ENCODE measurements at regions of chr1 and their contacts with region 1.

Region 1: GRCh38 chr1:16946646-16947045 is 24.9 kb downstream of the CROCC start:
- DNase-seq: no peak
- H3K4me3 ChIP-seq: no peak overlapping the region
- H3K27ac ChIP-seq: no peak overlapping the region
- H3K4me1 ChIP-seq: no peaks in the 10 kb centered on the region
- H3K27me3 ChIP-seq: no peaks in the 10 kb centered on the region
- CTCF ChIP-seq: no peak
- EP300 ChIP-seq: no peak
- POLR2A ChIP-seq: no peak

Region 2: GRCh38 chr1:16621300-16621658 is 325.4 kb before region 1 on chr1:
- intact Hi-C with region 1: loop called (anchors 1 kb)
- DNase-seq: no peak
- H3K4me3 ChIP-seq: no peak overlapping the region
- H3K27ac ChIP-seq: no peak overlapping the region
- H3K4me1 ChIP-seq: peaks cover 0 to 7% (median 6%) of the 10 kb centered on the region in 4 donors
- H3K27me3 ChIP-seq: no peaks in the 10 kb centered on the region
- CTCF ChIP-seq: peak in 1 of 4 experiments; percentile 45
- EP300 ChIP-seq: no peak
- POLR2A ChIP-seq: no peak

Region 3: DNA sequence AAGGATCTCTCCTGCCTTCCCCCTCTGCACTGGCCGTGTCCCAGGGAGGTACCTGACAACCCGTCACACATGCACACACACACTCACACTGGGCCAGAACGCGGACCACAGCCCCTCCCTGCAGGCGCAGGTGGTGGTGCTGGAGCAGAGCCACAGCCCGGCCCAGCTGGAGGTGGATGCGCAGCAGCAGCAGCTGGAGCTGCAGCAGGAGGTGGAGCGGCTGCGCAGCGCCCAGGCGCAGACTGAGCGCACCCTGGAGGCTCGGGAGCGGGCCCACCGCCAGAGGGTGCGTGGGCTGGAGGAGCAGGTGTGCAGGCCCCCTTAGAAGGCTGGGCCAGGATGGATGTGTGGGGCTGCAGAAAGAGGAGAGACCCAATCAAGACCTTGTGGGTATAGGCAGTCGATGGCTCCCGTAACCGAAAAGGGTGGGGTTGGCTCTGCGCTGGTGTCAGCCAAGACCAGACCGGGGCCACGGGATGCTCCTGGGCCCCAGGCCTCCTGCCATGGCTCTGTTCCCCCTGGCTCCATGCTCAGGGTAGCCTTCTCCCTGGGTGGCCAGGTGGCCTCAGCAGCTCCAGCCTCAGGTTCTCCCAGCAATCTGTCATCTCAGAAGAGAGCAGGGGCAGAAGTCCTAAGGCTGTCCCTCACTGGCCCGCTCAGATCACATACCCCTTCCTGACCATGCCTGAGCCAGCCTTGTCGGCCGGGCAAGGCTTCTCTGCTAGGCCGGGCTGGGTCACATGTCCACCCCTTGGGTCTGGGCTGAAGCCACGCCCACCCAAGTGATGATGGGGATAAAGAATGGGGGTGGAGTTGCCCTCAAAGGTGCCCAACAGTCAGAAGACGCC is 24.9 kb after region 1 on chr1:
- intact Hi-C with region 1: no loop called
- DNase-seq: no peak
- H3K4me3 ChIP-seq: no peak overlapping the region
- H3K27ac ChIP-seq: peak overlapping the region in 2 of 4 donors; percentile 38 to 54
- H3K4me1 ChIP-seq: peaks cover 0 to 29% (median 17%) of the 10 kb centered on the region in 4 donors
- H3K27me3 ChIP-seq: no peaks in the 10 kb centered on the region
- CTCF ChIP-seq: no peak
- EP300 ChIP-seq: no peak
- POLR2A ChIP-seq: no peak

Region 4: DNA sequence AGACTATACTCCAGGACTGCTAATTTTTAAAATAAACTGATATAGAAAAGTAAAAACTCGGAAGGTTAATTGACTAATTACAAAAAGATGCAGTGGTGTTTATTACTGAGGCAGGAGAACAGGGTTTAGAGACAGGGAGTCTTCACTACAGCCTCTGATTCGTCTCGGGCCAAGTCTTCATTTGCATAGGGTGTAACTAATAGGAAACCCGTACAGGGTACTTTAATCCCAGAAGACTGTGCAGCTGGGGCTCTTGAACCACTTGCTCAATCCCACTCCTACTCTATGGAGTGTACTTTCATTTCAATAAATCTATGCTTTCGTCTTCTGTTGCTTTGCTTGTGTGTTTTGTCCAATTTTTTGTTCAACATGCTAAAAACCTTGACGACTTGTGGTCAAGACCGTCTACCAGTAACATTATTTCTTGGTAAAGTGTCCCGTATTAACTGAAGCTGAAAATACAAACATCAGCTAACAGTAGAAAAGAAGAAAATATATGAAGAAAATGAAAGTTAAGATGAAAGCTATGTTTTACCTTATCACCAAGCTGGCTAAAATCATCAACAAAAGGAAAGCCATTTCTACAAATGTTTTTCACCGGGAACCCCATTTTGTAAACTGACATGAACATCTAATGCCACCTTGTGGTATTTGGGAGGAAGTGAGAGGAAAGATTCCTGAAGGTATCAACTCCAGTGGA is 99.1 kb after region 1 on chr1:
- intact Hi-C with region 1: loop called (anchors 1 kb)
- DNase-seq: no peak
- H3K4me3 ChIP-seq: peak overlapping the region in 3 of 4 donors; percentile 13 to 22 (median 16)
- H3K27ac ChIP-seq: peak overlapping the region; percentile 18 to 54 (median 34)
- H3K4me1 ChIP-seq: peaks cover 0 to 11% (median 6%) of the 10 kb centered on the region in 4 donors
- H3K27me3 ChIP-seq: no peaks in the 10 kb centered on the region
- CTCF ChIP-seq: peak; percentile 58 to 79 (median 72)
- EP300 ChIP-seq: no peak
- POLR2A ChIP-seq: no peak

Region 5: DNA sequence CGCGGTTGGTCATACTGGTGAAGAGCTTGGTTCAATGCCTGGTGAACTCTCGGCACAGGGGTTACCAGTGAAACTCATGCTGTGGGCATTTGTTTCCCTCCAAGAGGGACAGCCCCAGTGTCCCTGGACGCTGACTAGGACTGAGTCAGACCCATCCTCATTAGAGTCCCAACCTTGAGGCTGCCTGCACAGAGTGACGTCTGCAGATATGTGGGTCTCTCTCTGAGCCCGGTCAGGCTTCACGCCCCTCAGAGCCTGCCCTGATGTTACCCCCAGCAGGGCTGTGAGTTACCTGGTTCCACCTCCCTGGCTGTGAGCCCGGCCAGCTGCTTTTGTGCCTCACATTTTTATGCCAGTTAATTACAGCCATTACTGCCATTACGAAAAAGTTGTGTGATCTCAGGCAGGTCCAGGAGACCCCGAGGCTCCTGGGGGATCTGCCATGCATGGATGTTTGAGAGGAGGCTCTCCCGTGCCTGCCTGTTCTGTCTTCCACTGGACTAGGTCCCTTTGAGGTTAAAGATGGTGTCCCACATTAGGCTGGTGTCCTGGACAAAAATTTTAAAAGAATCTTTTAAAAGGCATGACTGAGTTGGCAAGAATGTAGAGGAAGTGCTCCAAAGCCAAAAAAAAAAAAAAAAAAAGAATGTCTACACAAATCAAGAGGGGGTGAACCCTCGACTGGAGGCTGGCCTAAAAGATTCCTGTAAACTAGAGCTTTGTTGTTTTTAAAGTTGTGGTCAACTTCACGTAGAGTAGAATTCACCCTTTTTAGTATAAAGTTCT is 221.6 kb after region 1 on chr1:
- intact Hi-C with region 1: no loop called
- DNase-seq: no peak
- H3K4me3 ChIP-seq: no peak overlapping the region
- H3K27ac ChIP-seq: no peak overlapping the region
- H3K4me1 ChIP-seq: no peaks in the 10 kb centered on the region
- H3K27me3 ChIP-seq: no peaks in the 10 kb centered on the region
- CTCF ChIP-seq: no peak
- EP300 ChIP-seq: no peak
- POLR2A ChIP-seq: no peak